Gastrocnemius medialis (tissue), 4 donors: ENCODE measurements at regions of chr12 and their contacts with region 1.

Region 1: GRCh38 chr12:124321040-124321481 is 26.2 kb downstream of the RFLNA start:
- DNase-seq: peak; percentile 37 to 50
- ATAC-seq: peak; percentile 72 to 74
- H3K4me3 ChIP-seq: no peak overlapping the region
- H3K27ac ChIP-seq: no peak overlapping the region
- H3K4me1 ChIP-seq: no peaks in the 10 kb centered on the region
- H3K27me3 ChIP-seq: no peaks in the 10 kb centered on the region
- CTCF ChIP-seq: peak; percentile 92 to 95 (median 94)
- POLR2A ChIP-seq: no peak

Region 2: GRCh38 chr12:124053851-124054250 is 267.2 kb before region 1 on chr12:
- in situ Hi-C with region 1: loop called (anchors 5 to 10 kb)
- intact Hi-C with region 1: loop called (anchors 1 kb)
- DNase-seq: peak in 1 of 2 donors; percentile 26
- ATAC-seq: peak; percentile 53 to 69
- H3K4me3 ChIP-seq: no peak overlapping the region
- H3K27ac ChIP-seq: no peak overlapping the region
- H3K4me1 ChIP-seq: no peaks in the 10 kb centered on the region
- H3K27me3 ChIP-seq: no peaks in the 10 kb centered on the region
- CTCF ChIP-seq: peak; percentile 50 to 63 (median 54)
- POLR2A ChIP-seq: no peak

Region 3: DNA sequence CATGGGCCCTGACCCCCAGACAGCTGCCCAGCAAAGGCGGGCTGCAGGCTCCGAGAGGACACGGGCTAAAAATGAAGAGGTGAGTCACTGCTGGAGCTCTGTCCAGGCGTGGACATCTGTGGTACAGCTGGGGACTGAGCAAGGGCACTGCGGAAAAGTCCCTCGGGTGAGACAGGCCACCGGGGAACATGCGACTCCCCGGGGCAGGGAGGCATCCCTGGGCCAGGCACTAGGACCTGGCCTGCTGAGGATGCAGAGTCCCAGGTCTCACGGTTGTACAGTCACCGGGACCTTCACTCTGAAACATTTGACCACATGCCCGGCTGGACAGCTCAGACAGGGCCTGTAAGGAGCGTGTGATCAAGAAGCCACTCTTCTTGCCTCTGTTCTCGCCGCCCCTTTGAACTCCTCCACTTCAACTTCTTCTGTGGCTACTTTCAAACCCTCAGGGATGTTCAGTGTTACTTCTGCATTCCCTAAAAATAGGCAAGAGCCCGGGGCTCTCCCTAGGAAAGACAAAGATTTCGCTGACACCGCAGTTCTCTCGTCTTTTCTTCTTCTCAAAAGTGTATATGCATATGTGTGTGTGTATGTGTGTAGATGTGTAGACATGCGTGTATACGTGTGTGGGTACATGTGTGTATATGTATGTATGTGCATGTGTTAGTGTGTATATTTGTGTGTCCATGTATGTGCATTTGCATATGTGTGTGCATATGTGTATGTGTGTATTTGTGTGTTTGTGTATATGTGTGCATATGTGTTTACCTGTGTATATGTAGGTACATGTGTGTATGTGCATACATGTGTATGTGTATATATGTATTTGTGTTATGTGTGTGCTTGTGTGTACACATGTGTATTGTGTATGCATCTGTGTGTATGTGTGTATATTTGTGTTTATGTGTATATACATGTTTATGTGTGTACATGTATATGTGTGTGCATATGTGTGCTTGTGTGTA is 31.1 kb before region 1 on chr12:
- in situ Hi-C with region 1: no loop called
- intact Hi-C with region 1: loop called (anchors 2 kb)
- DNase-seq: peak; percentile 64 to 86
- ATAC-seq: peak; percentile 97 to 98
- H3K4me3 ChIP-seq: peak overlapping the region in 2 of 4 donors; percentile 30 to 36
- H3K27ac ChIP-seq: peak overlapping the region; percentile 79 to 86 (median 84)
- H3K4me1 ChIP-seq: peaks cover 11 to 18% of the 10 kb centered on the region in 2 donors
- H3K27me3 ChIP-seq: no peaks in the 10 kb centered on the region
- CTCF ChIP-seq: no peak
- POLR2A ChIP-seq: no peak